B cell (primary cell): ENCODE measurements at regions of chr1 and their contacts with region 1.

Region 1: DNA sequence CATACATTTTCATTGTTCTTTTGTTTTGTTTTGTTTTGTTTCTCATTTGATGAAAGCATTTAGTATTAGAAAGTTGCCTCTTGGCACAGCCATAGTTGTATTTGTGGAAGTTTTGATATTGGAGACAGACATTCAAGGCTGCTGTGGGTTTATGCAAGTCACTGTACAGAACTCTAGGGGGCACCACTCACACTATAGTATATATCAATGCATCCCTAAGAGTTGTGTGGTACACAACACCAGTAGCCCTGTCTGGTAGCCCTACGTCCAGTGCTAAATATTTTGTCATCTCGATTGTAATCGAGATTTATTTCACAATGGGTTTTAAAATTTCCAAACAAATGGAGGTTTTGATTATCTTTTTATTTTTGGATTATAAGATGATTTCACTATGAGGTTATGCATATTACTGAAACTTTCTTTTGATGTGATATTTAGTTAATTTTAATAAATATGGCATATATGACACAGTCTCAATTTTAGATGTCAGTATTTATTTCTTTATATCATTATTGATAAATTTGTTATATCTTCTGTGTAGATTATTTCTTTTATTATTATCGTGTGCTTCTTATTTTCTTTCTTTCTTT is 112.2 kb downstream of the NR5A2 start:
- DNase-seq: peak; percentile 71
- ATAC-seq: peak; percentile 86
- H3K4me3 ChIP-seq: no peak overlapping the region
- H3K4me3 Mint-ChIP-seq: no peak overlapping the region
- H3K27ac ChIP-seq: no peak overlapping the region
- H3K27ac Mint-ChIP-seq: no peak overlapping the region
- H3K4me1 ChIP-seq: no peaks in the 10 kb centered on the region
- H3K4me1 Mint-ChIP-seq: peaks cover 2% of the 10 kb centered on the region
- H3K27me3 ChIP-seq: no peaks in the 10 kb centered on the region
- H3K27me3 Mint-ChIP-seq: no peaks in the 10 kb centered on the region
- CTCF ChIP-seq: peak; percentile 86

Region 2: DNA sequence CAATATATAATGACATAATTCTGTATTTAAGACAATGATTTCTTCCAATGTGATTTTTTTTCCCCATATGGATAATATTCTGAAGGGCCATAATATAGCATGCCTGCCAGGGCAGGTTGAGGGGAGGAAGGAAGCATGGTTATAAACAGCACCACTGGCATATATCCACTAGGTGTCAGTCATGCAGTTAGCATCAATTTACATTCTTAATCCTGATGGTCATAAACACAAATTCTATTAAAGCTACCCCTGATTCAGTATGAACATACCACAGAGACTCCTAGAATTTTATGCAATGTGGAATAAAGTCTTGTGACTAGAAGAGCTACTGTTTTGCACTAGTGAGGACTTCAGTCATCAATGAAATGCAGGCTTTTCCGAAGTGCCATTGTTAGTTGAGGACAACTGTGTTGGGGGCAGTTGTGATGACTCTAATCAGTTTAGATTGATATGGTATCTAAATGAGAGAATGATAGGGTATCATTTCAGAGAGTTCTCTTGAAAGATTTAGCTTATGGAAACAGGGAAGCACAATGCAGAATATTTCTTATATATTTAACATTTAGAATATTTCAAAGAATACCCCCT is 455.0 kb before region 1 on chr1:
- CTCF ChIA-PET with region 1: interaction called, 7 read pairs
- POLR2A ChIA-PET with region 1: no interaction called
- intact Hi-C with region 1: loop called (anchors 10 kb)
- DNase-seq: peak; percentile 69
- ATAC-seq: peak; percentile 73
- H3K4me3 ChIP-seq: no peak overlapping the region
- H3K4me3 Mint-ChIP-seq: no peak overlapping the region
- H3K27ac ChIP-seq: no peak overlapping the region
- H3K27ac Mint-ChIP-seq: no peak overlapping the region
- H3K4me1 ChIP-seq: no peaks in the 10 kb centered on the region
- H3K4me1 Mint-ChIP-seq: no peaks in the 10 kb centered on the region
- H3K27me3 ChIP-seq: peaks cover 0 to 7% (median 6%) of the 10 kb centered on the region in 4 experiments
- H3K27me3 Mint-ChIP-seq: peaks cover 24% of the 10 kb centered on the region
- CTCF ChIP-seq: peak; percentile 92

Region 3: DNA sequence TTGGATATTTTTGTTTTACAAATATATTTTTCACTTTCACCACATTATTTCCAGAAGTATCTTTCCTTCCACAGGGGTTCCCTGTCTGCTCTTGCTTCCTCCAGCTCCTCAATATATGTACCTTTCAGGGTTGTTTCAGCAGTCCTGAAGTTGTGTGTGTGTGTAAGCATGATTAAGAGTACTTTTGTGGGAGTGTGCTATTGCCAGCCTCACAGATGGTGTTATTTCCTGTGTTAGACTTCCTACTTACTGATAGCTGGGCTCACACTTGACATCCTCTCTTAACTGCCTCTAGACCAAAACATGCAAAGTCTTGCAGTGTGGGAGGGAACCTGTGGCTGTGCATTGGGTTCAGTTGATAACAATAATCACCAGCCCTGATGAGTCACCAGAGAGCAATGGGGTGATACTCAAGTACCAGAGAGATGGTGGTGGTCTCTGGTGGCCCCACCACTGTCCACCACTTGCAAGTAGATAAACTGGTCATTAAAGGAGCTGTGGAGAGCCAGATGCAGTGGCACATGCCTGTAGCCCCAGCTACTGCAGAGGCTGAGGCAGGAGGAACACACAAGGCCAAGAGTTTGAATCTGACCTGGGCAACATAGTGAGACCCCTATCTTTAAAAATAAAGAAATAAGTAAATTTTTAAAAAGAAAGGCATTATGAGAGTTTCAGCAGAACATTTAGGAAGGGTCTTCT is 14.5 kb after region 1 on chr1:
- CTCF ChIA-PET with region 1: interaction called, 12 read pairs
- POLR2A ChIA-PET with region 1: interaction called, 3 read pairs
- intact Hi-C with region 1: loop called (anchors 2 kb)
- DNase-seq: peak; percentile 78
- ATAC-seq: peak; percentile 88
- H3K4me3 ChIP-seq: peak overlapping the region in 2 of 5 experiments; percentile 18 to 50
- H3K4me3 Mint-ChIP-seq: peak overlapping the region; percentile 80
- H3K27ac ChIP-seq: peak overlapping the region; percentile 78 to 98
- H3K27ac Mint-ChIP-seq: peak overlapping the region; percentile 93
- H3K4me1 ChIP-seq: peaks cover 40 to 52% of the 10 kb centered on the region in 2 donors
- H3K4me1 Mint-ChIP-seq: peaks cover 59% of the 10 kb centered on the region
- H3K27me3 ChIP-seq: no peaks in the 10 kb centered on the region
- H3K27me3 Mint-ChIP-seq: no peaks in the 10 kb centered on the region
- CTCF ChIP-seq: no peak

Region 4: GRCh38 chr1:200242110-200243041 is 102.6 kb after region 1 on chr1:
- CTCF ChIA-PET with region 1: no interaction called
- POLR2A ChIA-PET with region 1: no interaction called
- intact Hi-C with region 1: no loop called
- DNase-seq: no peak
- ATAC-seq: no peak
- H3K4me3 ChIP-seq: no peak overlapping the region
- H3K4me3 Mint-ChIP-seq: no peak overlapping the region
- H3K27ac ChIP-seq: no peak overlapping the region
- H3K27ac Mint-ChIP-seq: no peak overlapping the region
- H3K4me1 ChIP-seq: peaks cover 0 to 15% of the 10 kb centered on the region in 2 donors
- H3K4me1 Mint-ChIP-seq: peaks cover 14% of the 10 kb centered on the region
- H3K27me3 ChIP-seq: peaks cover 0 to 29% (median 11%) of the 10 kb centered on the region in 4 experiments
- H3K27me3 Mint-ChIP-seq: peaks cover 46% of the 10 kb centered on the region
- CTCF ChIP-seq: no peak

Region 5: GRCh38 chr1:200258447-200259375 is 119.0 kb after region 1 on chr1:
- CTCF ChIA-PET with region 1: interaction called, 5 read pairs
- POLR2A ChIA-PET with region 1: no interaction called
- intact Hi-C with region 1: loop called (anchors 5 kb)
- DNase-seq: peak; percentile 60
- ATAC-seq: peak; percentile 79
- H3K4me3 ChIP-seq: no peak overlapping the region
- H3K4me3 Mint-ChIP-seq: no peak overlapping the region
- H3K27ac ChIP-seq: no peak overlapping the region
- H3K27ac Mint-ChIP-seq: no peak overlapping the region
- H3K4me1 ChIP-seq: no peaks in the 10 kb centered on the region
- H3K4me1 Mint-ChIP-seq: peaks cover 6% of the 10 kb centered on the region
- H3K27me3 ChIP-seq: no peaks in the 10 kb centered on the region
- H3K27me3 Mint-ChIP-seq: no peaks in the 10 kb centered on the region
- CTCF ChIP-seq: peak; percentile 76

Region 6: GRCh38 chr1:200488375-200489165 is 348.8 kb after region 1 on chr1:
- CTCF ChIA-PET with region 1: interaction called, 71 read pairs
- POLR2A ChIA-PET with region 1: no interaction called
- intact Hi-C with region 1: loop called (anchors 1 kb)
- DNase-seq: peak; percentile 71
- ATAC-seq: peak; percentile 69
- H3K4me3 ChIP-seq: no peak overlapping the region
- H3K4me3 Mint-ChIP-seq: no peak overlapping the region
- H3K27ac ChIP-seq: no peak overlapping the region
- H3K27ac Mint-ChIP-seq: no peak overlapping the region
- H3K4me1 ChIP-seq: peaks cover 0 to 5% of the 10 kb centered on the region in 2 donors
- H3K4me1 Mint-ChIP-seq: no peaks in the 10 kb centered on the region
- H3K27me3 ChIP-seq: peaks cover 0 to 4% (median 0%) of the 10 kb centered on the region in 4 experiments
- H3K27me3 Mint-ChIP-seq: peaks cover 14% of the 10 kb centered on the region
- CTCF ChIP-seq: peak; percentile 91

Region 7: GRCh38 chr1:200510228-200510623 is 370.5 kb after region 1 on chr1:
- CTCF ChIA-PET with region 1: interaction called, 6 read pairs
- POLR2A ChIA-PET with region 1: no interaction called
- intact Hi-C with region 1: loop called (anchors 1 kb)
- DNase-seq: peak; percentile 77
- ATAC-seq: peak; percentile 63
- H3K4me3 ChIP-seq: no peak overlapping the region
- H3K4me3 Mint-ChIP-seq: no peak overlapping the region
- H3K27ac ChIP-seq: no peak overlapping the region
- H3K27ac Mint-ChIP-seq: no peak overlapping the region
- H3K4me1 ChIP-seq: no peaks in the 10 kb centered on the region
- H3K4me1 Mint-ChIP-seq: no peaks in the 10 kb centered on the region
- H3K27me3 ChIP-seq: peaks cover 0 to 9% (median 2%) of the 10 kb centered on the region in 4 experiments
- H3K27me3 Mint-ChIP-seq: peaks cover 24% of the 10 kb centered on the region
- CTCF ChIP-seq: peak; percentile 97